CD8-positive, alpha-beta T cell (primary cell): ENCODE measurements at regions of chr1 and their contacts with region 1.

Region 1: GRCh38 chr1:61659061-61659460 is 65.9 kb downstream of the TM2D1 start:
- DNase-seq: no peak
- ATAC-seq: no peak
- H3K4me3 ChIP-seq: no peak overlapping the region
- H3K4me3 Mint-ChIP-seq: no peak overlapping the region
- H3K27ac ChIP-seq: no peak overlapping the region
- H3K27ac Mint-ChIP-seq: no peak overlapping the region
- H3K4me1 ChIP-seq: no peaks in the 10 kb centered on the region
- H3K4me1 Mint-ChIP-seq: no peaks in the 10 kb centered on the region
- H3K27me3 ChIP-seq: no peaks in the 10 kb centered on the region
- H3K27me3 Mint-ChIP-seq: no peaks in the 10 kb centered on the region
- CTCF ChIP-seq: no peak

Region 2: DNA sequence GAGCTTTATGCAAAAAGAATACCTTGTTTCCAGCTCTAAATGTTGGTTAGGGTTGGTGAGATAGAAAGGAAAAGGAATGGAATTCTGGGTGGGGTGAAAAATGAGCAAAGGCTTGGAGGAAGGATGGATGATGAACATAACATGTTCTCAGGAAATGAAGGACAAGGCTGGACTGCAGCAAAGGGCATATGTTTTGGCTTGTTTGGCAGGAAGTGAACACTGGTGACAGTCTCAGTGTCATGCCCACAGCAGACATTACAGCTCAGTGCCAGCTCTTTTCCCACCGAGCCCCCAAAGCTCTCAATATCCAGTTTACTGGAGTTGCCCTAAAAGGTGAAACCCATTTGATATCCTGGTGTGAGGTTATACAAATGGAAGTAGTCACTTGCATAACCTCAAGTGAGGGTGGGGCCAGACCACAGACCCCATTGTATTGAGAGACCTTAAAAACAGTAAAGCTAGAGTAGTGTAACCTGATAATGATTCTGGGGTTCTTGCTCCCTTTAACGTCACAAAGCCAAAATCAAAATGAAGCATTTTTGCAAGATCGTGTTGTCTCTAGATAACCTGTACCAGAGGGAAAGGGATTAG is 306.1 kb before region 1 on chr1:
- CTCF ChIA-PET with region 1: no interaction called
- POLR2A ChIA-PET with region 1: no interaction called
- intact Hi-C with region 1: no loop called
- DNase-seq: no peak
- ATAC-seq: no peak
- H3K4me3 ChIP-seq: no peak overlapping the region
- H3K4me3 Mint-ChIP-seq: no peak overlapping the region
- H3K27ac ChIP-seq: no peak overlapping the region
- H3K27ac Mint-ChIP-seq: peak overlapping the region; percentile 10
- H3K4me1 ChIP-seq: no peaks in the 10 kb centered on the region
- H3K4me1 Mint-ChIP-seq: peaks cover 2% of the 10 kb centered on the region
- H3K27me3 ChIP-seq: no peaks in the 10 kb centered on the region
- H3K27me3 Mint-ChIP-seq: no peaks in the 10 kb centered on the region
- CTCF ChIP-seq: no peak

Region 3: GRCh38 chr1:61620536-61620935 is 38.5 kb before region 1 on chr1:
- CTCF ChIA-PET with region 1: no interaction called
- POLR2A ChIA-PET with region 1: no interaction called
- intact Hi-C with region 1: loop called in 1 of 2 experiments (anchors 1 kb)
- DNase-seq: no peak
- ATAC-seq: no peak
- H3K4me3 ChIP-seq: no peak overlapping the region
- H3K4me3 Mint-ChIP-seq: no peak overlapping the region
- H3K27ac ChIP-seq: no peak overlapping the region
- H3K27ac Mint-ChIP-seq: no peak overlapping the region
- H3K4me1 ChIP-seq: no peaks in the 10 kb centered on the region
- H3K4me1 Mint-ChIP-seq: no peaks in the 10 kb centered on the region
- H3K27me3 ChIP-seq: no peaks in the 10 kb centered on the region
- H3K27me3 Mint-ChIP-seq: peaks cover 2% of the 10 kb centered on the region
- CTCF ChIP-seq: no peak

Region 4: GRCh38 chr1:61641578-61642336 is 17.3 kb before region 1 on chr1:
- CTCF ChIA-PET with region 1: interaction called, 7 read pairs
- POLR2A ChIA-PET with region 1: no interaction called
- intact Hi-C with region 1: loop called (anchors 1 kb)
- DNase-seq: peak; percentile 16 to 70 (median 57)
- ATAC-seq: peak; percentile 84
- H3K4me3 ChIP-seq: peak overlapping the region in 1 of 2 experiments; percentile 25
- H3K4me3 Mint-ChIP-seq: peak overlapping the region; percentile 69
- H3K27ac ChIP-seq: no peak overlapping the region
- H3K27ac Mint-ChIP-seq: peak overlapping the region; percentile 78
- H3K4me1 ChIP-seq: no peaks in the 10 kb centered on the region
- H3K4me1 Mint-ChIP-seq: peaks cover 11% of the 10 kb centered on the region
- H3K27me3 ChIP-seq: peaks cover 0 to 4% of the 10 kb centered on the region in 2 experiments
- H3K27me3 Mint-ChIP-seq: peaks cover 2% of the 10 kb centered on the region
- CTCF ChIP-seq: peak; percentile 73

Region 5: DNA sequence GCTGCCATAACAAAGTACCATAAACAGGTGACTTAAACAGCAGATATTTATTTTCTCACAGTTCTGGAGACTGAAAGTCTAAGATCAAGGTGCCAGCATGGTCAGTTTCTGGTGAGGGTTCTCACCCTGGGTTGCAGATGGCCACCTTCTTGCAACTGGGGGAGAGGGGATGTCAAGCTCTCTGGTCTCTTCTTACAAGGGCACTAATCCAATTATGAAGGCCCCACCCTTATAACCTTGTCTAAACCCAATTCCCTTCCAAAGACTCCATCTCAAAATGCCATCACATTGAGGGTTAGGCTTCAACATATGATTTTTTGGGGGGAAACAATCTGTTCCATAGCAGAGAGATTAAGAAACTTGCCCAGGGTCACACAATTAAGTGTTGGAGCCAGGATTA is 913.4 kb after region 1 on chr1:
- CTCF ChIA-PET with region 1: no interaction called
- POLR2A ChIA-PET with region 1: no interaction called
- intact Hi-C with region 1: no loop called
- DNase-seq: no peak
- ATAC-seq: no peak
- H3K4me3 ChIP-seq: no peak overlapping the region
- H3K4me3 Mint-ChIP-seq: no peak overlapping the region
- H3K27ac ChIP-seq: no peak overlapping the region
- H3K27ac Mint-ChIP-seq: no peak overlapping the region
- H3K4me1 ChIP-seq: no peaks in the 10 kb centered on the region
- H3K4me1 Mint-ChIP-seq: no peaks in the 10 kb centered on the region
- H3K27me3 ChIP-seq: no peaks in the 10 kb centered on the region
- H3K27me3 Mint-ChIP-seq: no peaks in the 10 kb centered on the region
- CTCF ChIP-seq: no peak